Breast epithelium (tissue), 4 donors: ENCODE measurements at regions of chr11 and their contacts with region 1.

Region 1: DNA sequence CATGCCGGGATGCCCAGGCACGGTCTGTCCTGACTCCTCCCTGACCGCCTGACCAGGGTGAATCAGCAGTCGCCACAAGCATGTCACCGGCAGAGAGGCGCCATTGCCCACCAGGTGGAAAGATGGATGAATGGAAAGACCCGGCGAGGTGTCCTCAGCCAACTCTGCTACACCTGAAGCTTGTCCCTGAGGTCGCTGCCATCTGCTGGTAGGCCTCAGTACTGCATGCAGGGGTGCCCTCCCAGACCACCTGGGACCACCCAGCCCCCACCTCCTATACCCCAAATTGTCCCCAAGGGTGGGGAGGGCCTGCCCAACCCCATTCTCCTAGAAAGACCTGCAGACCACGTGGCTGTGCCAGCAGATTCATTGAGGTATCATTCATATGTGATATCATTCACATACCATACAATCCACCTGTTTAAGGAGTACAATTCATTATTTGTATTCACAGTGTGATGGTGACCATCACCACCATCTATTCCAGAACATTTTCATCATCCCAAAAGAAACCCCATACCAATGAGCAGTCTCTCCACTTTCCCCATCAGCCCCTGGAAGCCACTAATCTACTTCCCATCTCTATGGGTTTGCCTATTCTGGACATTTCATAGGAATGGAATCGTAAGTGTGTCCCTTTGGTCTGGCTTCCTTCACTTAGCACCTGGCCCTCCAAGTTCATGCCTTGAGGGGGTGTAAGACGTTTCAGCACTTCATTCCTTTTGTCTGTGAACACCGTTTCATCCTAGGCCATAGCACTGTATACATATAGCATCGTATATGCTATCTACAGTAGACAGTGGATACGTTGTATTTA is 17.5 kb downstream of the FGF3 start:
- DNase-seq: no peak
- H3K4me3 ChIP-seq: no peak overlapping the region
- H3K27ac ChIP-seq: no peak overlapping the region
- H3K4me1 ChIP-seq: no peaks in the 10 kb centered on the region
- H3K27me3 ChIP-seq: no peaks in the 10 kb centered on the region
- CTCF ChIP-seq: peak in 2 of 3 donors; percentile 24 to 38
- POLR2A ChIP-seq: no peak

Region 2: GRCh38 chr11:69812927-69813326 is 11.2 kb after region 1 on chr11:
- intact Hi-C with region 1: loop called (anchors 1 kb)
- DNase-seq: no peak
- H3K4me3 ChIP-seq: no peak overlapping the region
- H3K27ac ChIP-seq: no peak overlapping the region
- H3K4me1 ChIP-seq: no peaks in the 10 kb centered on the region
- H3K27me3 ChIP-seq: peaks cover 0 to 46% of the 10 kb centered on the region in 2 donors
- CTCF ChIP-seq: no peak
- POLR2A ChIP-seq: no peak

Region 3: GRCh38 chr11:70002433-70002832 is 200.7 kb after region 1 on chr11:
- intact Hi-C with region 1: loop called (anchors 5 kb)
- DNase-seq: no peak
- H3K4me3 ChIP-seq: no peak overlapping the region
- H3K27ac ChIP-seq: no peak overlapping the region
- H3K4me1 ChIP-seq: no peaks in the 10 kb centered on the region
- H3K27me3 ChIP-seq: no peaks in the 10 kb centered on the region
- CTCF ChIP-seq: no peak
- POLR2A ChIP-seq: no peak